ENCODE measurements at regions of chr3 and their contacts with region 1.

Region 1: DNA sequence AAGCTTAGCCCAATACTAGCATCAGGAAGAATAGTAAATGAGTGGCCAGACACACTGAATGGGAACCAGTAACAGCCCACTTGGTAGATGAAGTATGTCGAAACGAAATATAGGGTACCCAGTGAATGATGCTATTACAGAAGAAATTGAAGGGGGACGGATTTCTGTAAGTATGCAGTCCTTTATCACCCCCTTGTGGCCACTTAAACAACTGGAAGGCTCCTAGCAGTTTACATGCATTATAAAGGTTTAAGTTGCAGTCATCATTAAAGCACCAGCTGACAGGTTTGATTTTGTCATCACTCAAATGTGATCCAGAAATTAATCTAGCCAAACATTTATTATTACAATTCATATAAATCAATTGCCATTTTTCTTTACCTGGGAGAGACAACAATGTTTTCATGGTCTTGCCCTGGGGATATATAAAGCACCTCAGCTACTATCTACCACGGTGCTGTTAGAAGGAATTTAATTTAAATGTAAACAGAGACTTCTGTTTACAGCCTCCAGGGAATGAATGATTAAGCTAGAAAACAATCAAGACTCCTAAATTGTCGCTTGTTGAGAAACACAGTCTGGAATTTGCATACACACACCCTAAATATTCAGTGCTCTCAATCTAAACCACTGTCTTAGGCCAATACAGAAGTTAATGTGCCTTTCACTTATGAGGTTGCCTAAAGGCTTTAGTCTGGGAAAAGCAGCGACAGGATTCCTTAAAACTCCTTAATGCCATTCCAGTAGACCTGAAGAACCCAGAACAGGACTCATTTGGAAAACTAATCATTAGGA is 7.8 kb downstream of the EIF1B start:
- DNase-seq: peak in 2 of 5 donors; percentile 19 to 30
- ATAC-seq: no peak
- H3K4me3 ChIP-seq: no peak overlapping the region
- H3K27ac ChIP-seq: no peak overlapping the region
- H3K4me1 ChIP-seq: peaks cover 0 to 27% (median 15%) of the 10 kb centered on the region in 12 donors
- H3K27me3 ChIP-seq: no peaks in the 10 kb centered on the region
- CTCF ChIP-seq: peak; percentile 67 to 89 (median 82)
- POLR2A ChIP-seq: no peak

Region 2: DNA sequence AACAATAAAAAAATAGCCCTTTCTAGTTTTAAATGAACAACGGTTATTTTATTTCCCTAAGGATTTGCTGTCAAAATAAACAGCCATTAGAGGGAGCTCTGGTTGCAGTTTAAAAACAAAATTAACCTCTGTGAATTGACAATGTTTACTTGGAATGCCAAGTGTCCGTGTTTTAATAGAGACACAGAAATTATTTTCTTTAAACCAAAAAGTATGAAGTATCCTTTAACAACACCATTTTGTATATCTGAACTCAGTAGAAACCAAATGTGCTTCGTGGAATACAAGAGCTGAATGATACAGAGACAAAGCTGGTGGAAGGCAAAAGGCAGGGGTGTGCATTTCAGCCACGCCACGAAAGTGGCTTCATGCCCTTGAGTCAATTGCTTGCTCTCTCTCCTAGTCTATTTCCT is 775.3 kb before region 1 on chr3:
- intact Hi-C with region 1: loop called in 4 of 10 experiments (anchors 10 kb)
- DNase-seq: no peak
- ATAC-seq: no peak
- H3K4me3 ChIP-seq: peak overlapping the region in 4 of 12 donors; percentile 17 to 32 (median 22)
- H3K27ac ChIP-seq: no peak overlapping the region
- H3K4me1 ChIP-seq: peaks cover 0 to 8% (median 0%) of the 10 kb centered on the region in 12 donors
- H3K27me3 ChIP-seq: no peaks in the 10 kb centered on the region
- CTCF ChIP-seq: peak in 11 of 12 donors; percentile 25 to 59 (median 52)
- POLR2A ChIP-seq: no peak

Region 3: GRCh38 chr3:40191850-40192448 is 125.3 kb before region 1 on chr3:
- intact Hi-C with region 1: loop called (anchors 1 to 2 kb)
- DNase-seq: peak in 4 of 5 donors; percentile 44 to 53 (median 46)
- ATAC-seq: peak in 3 of 4 donors; percentile 47 to 62 (median 56)
- H3K4me3 ChIP-seq: no peak overlapping the region
- H3K27ac ChIP-seq: no peak overlapping the region
- H3K4me1 ChIP-seq: peaks cover 0 to 25% (median 4%) of the 10 kb centered on the region in 12 donors
- H3K27me3 ChIP-seq: no peaks in the 10 kb centered on the region
- CTCF ChIP-seq: peak; percentile 93 to 98 (median 97)
- POLR2A ChIP-seq: no peak

Region 4: DNA sequence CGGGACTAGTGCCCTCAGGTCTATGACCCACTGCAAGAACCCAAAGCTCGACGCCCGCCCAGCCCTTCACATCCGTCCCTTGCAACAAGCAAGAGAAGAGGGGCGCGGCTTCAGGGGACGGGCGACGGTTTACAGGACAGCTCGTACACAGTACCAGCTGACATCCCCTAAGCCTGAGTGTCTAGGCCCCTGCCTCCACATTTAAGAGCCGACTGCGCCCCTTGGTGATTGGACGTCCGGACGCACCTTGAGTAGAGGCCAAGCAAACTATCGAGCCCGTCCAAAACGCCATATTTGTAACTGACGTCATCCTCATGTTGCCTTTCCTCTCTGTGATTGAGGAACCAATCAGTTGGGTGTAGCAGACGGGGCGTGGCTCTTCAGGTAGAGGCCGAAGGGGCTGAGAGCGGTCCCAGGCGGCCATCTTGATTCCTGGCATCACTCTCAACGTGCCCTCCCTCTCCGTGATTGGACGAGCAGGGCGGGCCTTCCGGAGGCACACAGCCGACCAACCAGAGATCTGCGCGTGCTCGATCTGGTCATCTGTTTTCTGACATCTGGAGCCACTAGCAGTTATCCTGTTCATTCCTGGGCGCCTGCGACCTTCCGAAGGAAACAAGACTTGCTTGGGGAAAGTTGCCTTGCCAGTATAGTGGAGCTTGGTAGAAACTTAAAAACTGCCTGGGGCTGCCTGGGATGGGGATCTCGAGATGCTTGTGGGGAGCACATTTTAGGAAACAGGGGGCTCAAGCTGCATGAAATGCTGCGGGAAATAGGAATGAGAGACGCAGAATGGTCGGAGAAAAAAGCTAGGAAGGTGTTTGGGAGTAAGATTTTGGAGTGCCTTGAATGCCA is 135.8 kb after region 1 on chr3:
- intact Hi-C with region 1: loop called in 4 of 10 experiments (anchors 5 to 10 kb)
- DNase-seq: peak; percentile 98 to 99 (median 98)
- ATAC-seq: peak; percentile 96 to 98 (median 97)
- H3K4me3 ChIP-seq: peak overlapping the region; percentile 36 to 82 (median 72)
- H3K27ac ChIP-seq: peak overlapping the region; percentile 89 to 98 (median 93)
- H3K4me1 ChIP-seq: peaks cover 6 to 39% (median 21%) of the 10 kb centered on the region in 12 donors
- H3K27me3 ChIP-seq: no peaks in the 10 kb centered on the region
- CTCF ChIP-seq: peak in 1 of 12 donors; percentile 5
- POLR2A ChIP-seq: peak in 1 of 2 donors; percentile 73

Region 5: DNA sequence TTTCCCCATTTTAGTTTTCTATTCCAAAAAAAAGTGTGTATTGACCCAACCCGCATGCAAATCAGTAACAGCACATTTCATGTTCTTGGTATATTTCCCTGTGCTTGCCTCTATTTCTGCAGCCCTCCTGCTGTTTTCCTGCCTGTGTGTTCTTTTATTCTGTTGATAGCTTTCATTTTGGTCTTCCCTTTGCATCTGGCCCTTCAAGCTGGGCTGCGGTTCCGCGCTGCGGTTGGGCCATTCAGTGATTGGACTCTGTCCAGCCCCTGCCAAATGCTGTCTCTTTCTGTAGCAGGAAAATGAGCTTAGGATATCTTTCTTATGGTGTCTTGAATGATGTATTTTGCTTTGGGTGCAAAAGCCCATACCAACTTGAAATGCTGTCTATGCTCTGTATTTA is 257.4 kb after region 1 on chr3:
- intact Hi-C with region 1: loop called in 1 of 10 experiments (anchors 10 kb)
- DNase-seq: no peak
- ATAC-seq: no peak
- H3K4me3 ChIP-seq: no peak overlapping the region
- H3K27ac ChIP-seq: no peak overlapping the region
- H3K4me1 ChIP-seq: no peaks in the 10 kb centered on the region
- H3K27me3 ChIP-seq: no peaks in the 10 kb centered on the region
- CTCF ChIP-seq: no peak
- POLR2A ChIP-seq: no peak

Measured in heart left ventricle (tissue), 16 donors.